ENCODE measurements at regions of chr6 and their contacts with region 1.

Region 1: DNA sequence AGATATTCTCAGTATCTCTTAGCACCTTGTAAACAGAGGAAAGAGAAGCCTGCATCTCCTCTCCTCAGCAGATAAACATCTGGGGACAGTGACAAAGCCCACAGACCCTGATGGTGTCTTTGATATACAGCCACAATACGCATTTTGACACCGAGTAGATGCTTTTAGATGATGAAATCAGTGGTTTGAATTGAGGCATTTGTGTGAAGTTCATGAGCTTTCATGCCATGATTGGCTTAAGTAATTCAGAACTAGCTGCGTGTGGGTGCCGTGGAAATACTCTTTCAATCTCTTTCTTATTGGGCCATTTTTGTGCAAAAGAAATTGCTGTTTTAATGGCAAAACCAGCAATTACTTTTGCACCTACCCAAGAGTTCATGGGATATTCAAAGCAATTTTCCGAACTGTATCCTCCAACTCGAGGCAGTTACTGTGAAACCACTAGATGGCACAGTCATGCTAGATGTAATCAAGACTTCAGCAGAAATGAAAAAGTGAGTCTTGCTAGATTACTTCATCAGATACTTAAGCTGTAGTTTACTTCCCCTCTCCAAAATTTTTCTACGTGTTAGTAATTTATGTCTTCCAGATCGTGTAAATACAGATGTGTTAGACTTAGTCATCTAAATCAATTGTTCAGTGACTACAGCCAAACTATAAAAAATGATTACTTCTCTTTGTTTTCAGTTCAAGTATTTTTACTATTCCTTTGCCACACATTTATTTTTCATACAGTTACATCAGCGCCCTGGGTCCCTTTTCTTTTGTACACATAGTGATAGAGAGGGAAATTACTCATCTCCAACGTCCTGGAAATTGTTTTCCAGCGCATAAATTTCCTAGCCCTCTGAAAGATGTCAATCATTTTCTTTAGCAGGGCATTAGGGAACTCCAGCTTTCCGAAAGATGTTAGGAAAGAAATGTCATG is 49.4 kb downstream of the IYD start:
- DNase-seq: peak; percentile 40
- ATAC-seq: peak; percentile 85
- H3K4me3 Mint-ChIP-seq: peak overlapping the region; percentile 61
- H3K27ac Mint-ChIP-seq: peak overlapping the region; percentile 83
- H3K4me1 Mint-ChIP-seq: peaks cover 40% of the 10 kb centered on the region
- H3K27me3 Mint-ChIP-seq: peaks cover 20% of the 10 kb centered on the region

Region 2: DNA sequence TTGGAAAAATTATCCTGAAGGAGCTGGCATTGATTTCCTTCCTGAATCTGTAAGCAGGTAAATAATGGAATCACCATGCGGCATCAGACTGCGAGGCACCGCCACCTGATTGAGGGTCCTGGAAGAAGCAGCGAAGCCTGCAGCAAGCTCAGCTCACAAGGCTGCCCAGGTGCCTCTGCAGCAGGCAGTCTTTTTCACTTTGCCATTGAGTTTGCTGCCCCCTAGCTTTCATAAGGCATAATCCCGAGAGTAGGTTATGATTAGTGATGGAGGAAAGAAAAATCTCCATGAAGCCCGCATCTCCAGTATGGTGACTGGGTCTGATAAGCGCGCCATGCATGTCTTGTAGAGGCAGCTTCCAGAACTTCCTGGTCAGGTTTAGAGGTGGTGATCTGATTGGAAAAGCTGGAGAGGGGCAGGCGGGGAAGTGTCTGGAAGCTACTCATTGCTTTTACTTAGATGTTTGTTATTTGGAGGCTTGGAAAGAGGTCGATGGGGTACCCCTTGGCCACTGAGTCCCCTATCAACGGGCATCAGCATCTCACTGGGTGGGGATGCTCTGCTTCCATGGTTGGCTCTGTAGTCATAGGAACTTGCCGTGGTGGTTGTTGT is 22.7 kb before region 1 on chr6:
- CTCF ChIA-PET with region 1: interaction called, 14 read pairs
- POLR2A ChIA-PET with region 1: no interaction called
- intact Hi-C with region 1: no loop called
- DNase-seq: peak; percentile 55
- ATAC-seq: peak; percentile 77
- H3K4me3 Mint-ChIP-seq: no peak overlapping the region
- H3K27ac Mint-ChIP-seq: no peak overlapping the region
- H3K4me1 Mint-ChIP-seq: no peaks in the 10 kb centered on the region
- H3K27me3 Mint-ChIP-seq: peaks cover 5% of the 10 kb centered on the region

Region 3: DNA sequence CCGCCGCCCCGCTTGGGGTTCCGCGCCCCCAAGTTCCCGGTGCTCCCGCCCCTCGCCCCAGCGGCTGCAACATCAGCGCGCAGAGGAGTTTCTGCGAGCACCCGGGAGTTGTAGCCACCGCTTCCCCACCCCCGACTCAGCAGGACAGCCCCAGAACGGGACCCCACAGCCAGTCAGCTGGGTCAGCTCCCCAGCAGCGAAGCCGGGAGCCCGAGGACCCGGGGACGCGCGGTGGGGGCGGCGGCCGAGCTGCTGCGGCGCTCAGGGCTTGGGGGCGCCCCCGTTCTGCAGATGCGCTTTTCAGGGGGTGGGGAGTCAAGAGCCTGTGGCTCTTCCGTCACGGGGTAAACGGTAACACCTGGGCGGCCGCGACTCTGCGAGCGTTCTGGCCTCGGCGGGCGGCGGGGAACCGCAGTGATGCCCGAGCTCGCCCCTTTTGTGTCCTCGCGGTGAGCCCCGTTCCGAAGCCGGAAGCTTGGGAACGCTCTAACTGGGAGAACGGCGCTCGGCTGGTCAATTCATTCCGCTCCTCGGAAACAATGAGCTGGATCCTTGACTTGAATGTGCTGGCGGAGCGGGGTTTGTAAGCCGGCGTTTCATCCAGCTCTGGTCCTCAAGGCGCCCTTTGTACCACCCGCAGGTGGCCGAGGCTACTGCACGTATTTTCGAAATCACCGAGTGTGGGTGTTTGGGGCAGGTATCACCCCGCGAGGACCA is 182.3 kb after region 1 on chr6:
- CTCF ChIA-PET with region 1: interaction called, 10 read pairs
- POLR2A ChIA-PET with region 1: interaction called, 3 read pairs
- intact Hi-C with region 1: loop called (anchors 1 kb)
- DNase-seq: peak; percentile 90
- ATAC-seq: peak; percentile 65
- H3K4me3 Mint-ChIP-seq: peak overlapping the region; percentile 80
- H3K27ac Mint-ChIP-seq: peak overlapping the region; percentile 88
- H3K4me1 Mint-ChIP-seq: peaks cover 23% of the 10 kb centered on the region
- H3K27me3 Mint-ChIP-seq: peaks cover 24% of the 10 kb centered on the region

Region 4: DNA sequence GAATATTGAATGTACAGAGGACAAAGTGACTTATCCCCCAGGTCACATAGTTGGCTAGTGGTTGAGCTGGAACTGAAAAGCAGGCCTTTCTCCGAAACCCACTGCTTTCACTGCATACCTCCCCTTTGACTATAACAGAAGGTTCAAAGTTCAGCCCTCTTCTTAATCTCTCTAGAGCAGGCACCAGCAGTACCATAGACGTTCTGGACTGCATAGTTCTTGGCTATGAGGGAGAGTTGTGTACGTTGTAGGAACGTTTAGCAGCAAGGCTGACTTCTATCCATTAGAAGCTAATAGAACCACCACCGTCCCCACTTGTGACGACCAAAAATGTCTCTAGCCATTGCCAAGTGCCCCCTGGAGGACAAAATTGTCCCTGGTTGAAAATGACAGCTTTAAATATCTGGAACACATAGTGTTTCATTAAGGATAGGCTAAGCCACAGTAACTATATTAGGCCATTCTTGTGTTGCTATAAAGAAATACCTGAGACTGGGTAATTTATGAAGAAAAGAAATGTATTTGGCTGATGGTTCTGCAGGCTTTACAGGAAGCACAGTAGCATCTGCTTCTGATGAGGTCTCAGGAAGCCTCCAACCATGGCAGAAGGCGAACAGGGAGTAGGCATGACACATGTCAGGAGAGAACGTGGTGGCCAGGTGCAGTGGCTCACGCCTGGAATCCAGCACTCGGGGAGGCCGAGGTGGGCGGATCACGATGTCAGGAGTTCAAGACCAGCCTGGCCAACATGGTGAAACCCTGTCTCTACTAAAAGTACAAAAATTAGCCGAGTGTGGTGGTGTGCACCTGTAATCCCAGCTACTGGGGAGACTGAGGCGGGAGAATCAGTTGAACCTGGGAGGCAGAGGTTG is 323.7 kb after region 1 on chr6:
- CTCF ChIA-PET with region 1: interaction called, 7 read pairs
- POLR2A ChIA-PET with region 1: no interaction called
- intact Hi-C with region 1: loop called (anchors 1 to 2 kb)
- DNase-seq: peak; percentile 46
- ATAC-seq: no peak
- H3K4me3 Mint-ChIP-seq: no peak overlapping the region
- H3K27ac Mint-ChIP-seq: no peak overlapping the region
- H3K4me1 Mint-ChIP-seq: no peaks in the 10 kb centered on the region
- H3K27me3 Mint-ChIP-seq: no peaks in the 10 kb centered on the region

Region 5: GRCh38 chr6:151323791-151324487 is 905.8 kb after region 1 on chr6:
- CTCF ChIA-PET with region 1: no interaction called
- POLR2A ChIA-PET with region 1: no interaction called
- intact Hi-C with region 1: loop called in 1 of 2 experiments (anchors 5 kb)
- DNase-seq: peak; percentile 83
- ATAC-seq: peak; percentile 90
- H3K4me3 Mint-ChIP-seq: no peak overlapping the region
- H3K27ac Mint-ChIP-seq: no peak overlapping the region
- H3K4me1 Mint-ChIP-seq: peaks cover 20% of the 10 kb centered on the region
- H3K27me3 Mint-ChIP-seq: peaks cover 31% of the 10 kb centered on the region